ENCODE measurements at regions of chr2 and their contacts with region 1.

Region 1: DNA sequence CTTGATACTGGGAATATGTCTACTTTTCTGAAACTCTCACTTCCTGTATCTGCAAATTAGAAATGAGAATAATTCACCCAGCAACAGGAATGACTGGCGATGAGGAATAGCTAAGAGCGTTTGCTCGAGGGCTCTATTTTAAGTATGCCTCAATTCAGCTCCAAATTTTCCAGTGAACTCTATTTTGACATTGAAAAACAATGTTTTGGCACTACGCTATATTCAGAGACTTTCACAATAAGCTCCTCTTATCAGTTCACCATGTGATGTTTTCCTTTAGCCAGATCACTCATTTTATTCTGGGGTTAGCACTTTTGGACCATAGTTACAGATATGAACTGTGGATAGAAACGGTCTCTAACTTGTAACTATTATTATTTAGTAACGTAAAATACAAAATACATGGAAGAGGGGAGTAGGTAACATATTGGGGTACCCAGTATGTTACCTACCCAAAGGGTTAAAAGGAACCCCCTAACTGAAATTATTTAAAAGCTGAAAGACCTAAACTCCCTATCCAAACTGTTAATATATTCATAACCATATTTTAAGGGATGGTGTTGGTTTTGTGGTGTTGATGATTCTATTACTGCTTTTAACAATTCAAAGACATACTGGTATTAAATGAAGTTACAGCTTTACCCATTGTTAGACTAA is 28.1 kb downstream of the SLC40A1 start:
- DNase-seq: no peak
- ATAC-seq: peak; percentile 39 to 85 (median 74)
- H3K4me3 ChIP-seq: peak overlapping the region in 1 of 12 donors; percentile 1
- H3K27ac ChIP-seq: peak overlapping the region; percentile 12 to 74 (median 60)
- H3K4me1 ChIP-seq: peaks cover 0 to 63% (median 33%) of the 10 kb centered on the region in 12 donors
- H3K27me3 ChIP-seq: no peaks in the 10 kb centered on the region
- CTCF ChIP-seq: no peak
- POLR2A ChIP-seq: no peak

Region 2: DNA sequence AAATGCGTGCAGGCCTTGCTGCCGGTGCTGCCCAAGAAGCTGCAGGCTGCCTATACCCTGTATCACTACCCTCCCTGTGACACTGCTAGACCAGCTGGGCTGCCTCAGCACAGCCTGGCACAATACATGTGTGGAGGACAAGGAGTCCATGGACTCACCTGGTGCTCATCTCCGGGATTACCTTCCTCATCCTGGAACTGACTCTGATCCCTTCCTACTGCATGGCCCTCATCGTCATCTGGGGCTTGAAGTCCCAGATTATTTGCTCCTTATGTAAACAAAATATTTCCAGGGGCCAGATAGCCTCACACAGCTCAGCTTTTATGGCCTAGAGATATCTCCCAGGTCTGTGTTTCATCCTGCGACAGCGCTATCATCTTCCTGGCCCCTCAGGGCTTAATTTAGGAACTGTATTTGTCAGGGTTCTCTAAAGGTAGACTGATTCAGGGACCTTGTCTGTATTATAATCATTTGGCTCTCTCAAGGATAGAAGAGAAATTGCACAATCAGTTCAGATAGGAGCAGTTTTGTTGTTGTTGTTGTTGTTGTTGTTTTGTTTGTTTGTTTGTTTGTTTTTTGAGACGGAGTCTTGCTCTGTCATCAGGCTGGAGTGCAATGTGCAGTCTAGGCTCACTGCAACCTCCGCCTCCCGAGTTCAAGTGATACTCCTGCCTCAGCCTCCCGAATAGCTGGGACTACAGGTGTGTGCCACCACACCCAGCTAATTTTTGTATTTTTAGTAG is 68.3 kb before region 1 on chr2:
- intact Hi-C with region 1: loop called in 1 of 10 experiments (anchors 5 kb)
- DNase-seq: no peak
- ATAC-seq: peak in 1 of 4 donors; percentile 44
- H3K4me3 ChIP-seq: no peak overlapping the region
- H3K27ac ChIP-seq: no peak overlapping the region
- H3K4me1 ChIP-seq: peaks cover 0 to 16% (median 0%) of the 10 kb centered on the region in 12 donors
- H3K27me3 ChIP-seq: no peaks in the 10 kb centered on the region
- CTCF ChIP-seq: no peak
- POLR2A ChIP-seq: no peak